Activated CD8-positive, alpha-beta T cell treated with anti-CD3 and anti-CD28 coated beads, Interleukin-2, amount 10 ng/mL, durations not matched to agents 7 days and 5 days (primary cell): ENCODE measurements at regions of chr21 and their contacts with region 1.

Region 1: GRCh38 chr21:32538147-32538792 is 47.1 kb downstream of the TCP10L start:
- DNase-seq: peak; percentile 78
- ATAC-seq: peak; percentile 94
- H3K4me3 Mint-ChIP-seq: peak overlapping the region; percentile 19
- H3K27ac Mint-ChIP-seq: peak overlapping the region; percentile 69
- H3K4me1 Mint-ChIP-seq: peaks cover 22% of the 10 kb centered on the region
- H3K27me3 Mint-ChIP-seq: no peaks in the 10 kb centered on the region

Region 2: GRCh38 chr21:32569261-32570230 is 31.3 kb after region 1 on chr21:
- CTCF ChIA-PET with region 1: interaction called, 15 read pairs
- POLR2A ChIA-PET with region 1: no interaction called
- DNase-seq: peak; percentile 90
- ATAC-seq: peak; percentile 97
- H3K4me3 Mint-ChIP-seq: peak overlapping the region; percentile 79
- H3K27ac Mint-ChIP-seq: peak overlapping the region; percentile 83
- H3K4me1 Mint-ChIP-seq: peaks cover 22% of the 10 kb centered on the region
- H3K27me3 Mint-ChIP-seq: no peaks in the 10 kb centered on the region

Region 3: DNA sequence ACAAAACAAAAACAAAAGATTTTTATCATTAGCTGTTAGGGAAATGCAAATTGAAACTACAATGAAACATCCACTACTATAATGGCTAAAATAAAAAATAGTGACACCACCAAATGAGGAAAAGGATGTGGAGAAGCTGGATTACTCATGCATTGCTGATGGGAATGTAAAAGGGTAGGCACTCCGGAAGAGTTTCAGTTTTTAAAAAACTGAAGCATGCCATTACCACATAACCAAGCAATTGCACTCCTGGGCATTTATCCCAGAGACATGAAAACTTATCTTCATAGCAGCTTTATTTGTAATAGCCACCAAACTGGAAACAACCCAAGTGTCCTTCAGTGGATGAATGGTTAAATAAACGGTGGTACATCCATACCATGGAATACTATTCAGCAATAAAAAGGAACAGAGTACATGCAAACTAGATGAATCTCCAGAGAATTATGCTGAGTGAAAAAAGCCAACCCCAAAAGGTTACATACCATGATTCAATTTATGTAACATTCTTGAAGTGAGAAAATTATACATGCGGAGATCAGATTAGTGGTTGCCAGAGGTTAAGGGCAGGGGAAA is 88.4 kb after region 1 on chr21:
- CTCF ChIA-PET with region 1: no interaction called
- POLR2A ChIA-PET with region 1: no interaction called
- DNase-seq: no peak
- ATAC-seq: no peak
- H3K4me3 Mint-ChIP-seq: no peak overlapping the region
- H3K27ac Mint-ChIP-seq: no peak overlapping the region
- H3K4me1 Mint-ChIP-seq: peaks cover 5% of the 10 kb centered on the region
- H3K27me3 Mint-ChIP-seq: peaks cover 11% of the 10 kb centered on the region